ENCODE measurements at regions of chr3 and their contacts with region 1.

Region 1: GRCh38 chr3:47522082-47522987 is 8.8 kb upstream of the ELP6 start:
- DNase-seq: peak; percentile 87
- ATAC-seq: peak; percentile 98

Region 2: DNA sequence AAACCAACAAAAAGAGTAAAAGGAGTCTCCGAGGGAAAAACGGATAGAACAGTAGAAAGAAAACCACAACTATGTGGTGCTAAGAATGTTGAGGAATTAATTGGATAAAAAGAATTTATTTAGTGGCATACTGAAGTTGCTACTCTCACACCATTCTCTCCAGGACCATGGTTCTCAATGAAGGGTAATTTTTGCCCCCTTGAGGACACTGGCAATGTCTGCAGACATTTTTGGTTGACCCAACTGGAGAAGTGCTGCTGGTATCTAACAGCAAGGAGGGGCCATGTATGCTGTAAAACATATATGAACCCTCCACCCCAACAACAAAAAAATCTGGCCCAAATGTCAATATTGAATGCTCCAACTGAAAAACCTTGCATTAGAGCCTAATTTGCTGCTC is 142.2 kb after region 1 on chr3:
- intact Hi-C with region 1: loop called (anchors 10 kb)
- DNase-seq: no peak
- ATAC-seq: no peak

Region 3: GRCh38 chr3:47791193-47791855 is 269.0 kb after region 1 on chr3:
- intact Hi-C with region 1: loop called (anchors 2 kb)
- DNase-seq: no peak
- ATAC-seq: no peak